A673 (cell line): ENCODE measurements at regions of chr10 and their contacts with region 1.

Region 1: GRCh38 chr10:28410420-28411135 is 107.7 kb upstream of the MPP7 start:
- DNase-seq: no peak
- H3K4me3 ChIP-seq: no peak overlapping the region
- H3K27ac ChIP-seq: no peak overlapping the region
- H3K4me1 ChIP-seq: no peaks in the 10 kb centered on the region
- H3K27me3 ChIP-seq: no peaks in the 10 kb centered on the region
- CTCF ChIP-seq: peak; percentile 47

Region 2: GRCh38 chr10:28381903-28382347 is 28.7 kb before region 1 on chr10:
- CTCF ChIA-PET with region 1: no interaction called
- POLR2A ChIA-PET with region 1: no interaction called
- intact Hi-C with region 1: no loop called
- DNase-seq: peak; percentile 91
- H3K4me3 ChIP-seq: no peak overlapping the region
- H3K27ac ChIP-seq: no peak overlapping the region
- H3K4me1 ChIP-seq: no peaks in the 10 kb centered on the region
- H3K27me3 ChIP-seq: no peaks in the 10 kb centered on the region
- CTCF ChIP-seq: peak; percentile 90

Region 3: DNA sequence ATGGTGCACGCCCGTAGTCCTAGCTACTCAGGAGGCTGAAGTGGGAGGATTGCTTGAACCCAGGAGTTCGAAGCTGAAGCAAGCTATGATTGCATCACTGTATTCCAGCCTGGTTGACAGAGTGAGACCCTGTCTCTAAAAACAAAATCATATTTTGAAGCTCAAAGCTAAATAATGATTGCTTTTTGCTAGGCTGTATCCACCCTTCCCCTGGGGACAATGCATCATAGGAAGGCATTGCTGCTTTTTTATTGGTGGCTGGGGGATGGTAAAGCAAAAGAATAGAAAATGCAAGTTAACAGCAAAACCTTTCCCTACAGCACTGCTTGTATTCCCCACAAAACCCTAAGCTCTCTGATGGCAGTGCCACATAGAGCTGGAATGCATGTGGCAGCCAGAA is 14.8 kb after region 1 on chr10:
- CTCF ChIA-PET with region 1: no interaction called
- POLR2A ChIA-PET with region 1: interaction called, 14 read pairs
- intact Hi-C with region 1: no loop called
- DNase-seq: no peak
- H3K4me3 ChIP-seq: no peak overlapping the region
- H3K27ac ChIP-seq: no peak overlapping the region
- H3K4me1 ChIP-seq: no peaks in the 10 kb centered on the region
- H3K27me3 ChIP-seq: no peaks in the 10 kb centered on the region
- CTCF ChIP-seq: no peak

Region 4: GRCh38 chr10:28492116-28492920 is 81.7 kb after region 1 on chr10:
- CTCF ChIA-PET with region 1: interaction called, 10 read pairs
- POLR2A ChIA-PET with region 1: no interaction called
- intact Hi-C with region 1: no loop called
- DNase-seq: peak; percentile 76
- H3K4me3 ChIP-seq: no peak overlapping the region
- H3K27ac ChIP-seq: no peak overlapping the region
- H3K4me1 ChIP-seq: peaks cover 4% of the 10 kb centered on the region
- H3K27me3 ChIP-seq: no peaks in the 10 kb centered on the region
- CTCF ChIP-seq: no peak